ENCODE measurements at regions of chr22 and their contacts with region 1.

Region 1: GRCh38 chr22:25447686-25448434 is 116.6 kb upstream of the GRK3 start:
- DNase-seq: peak; percentile 92
- H3K4me3 ChIP-seq: peak overlapping the region; percentile 80
- H3K27ac ChIP-seq: peak overlapping the region; percentile 51
- H3K4me1 ChIP-seq: peaks cover 31% of the 10 kb centered on the region
- CTCF ChIP-seq: peak; percentile 83

Region 2: GRCh38 chr22:25362215-25362882 is 85.5 kb before region 1 on chr22:
- CTCF ChIA-PET with region 1: no interaction called
- POLR2A ChIA-PET with region 1: no interaction called
- intact Hi-C with region 1: loop called (anchors 2 kb)
- DNase-seq: peak; percentile 66
- H3K4me3 ChIP-seq: no peak overlapping the region
- H3K27ac ChIP-seq: no peak overlapping the region
- H3K4me1 ChIP-seq: no peaks in the 10 kb centered on the region
- CTCF ChIP-seq: peak; percentile 93